ENCODE measurements at regions of chr7 and their contacts with region 1.

Region 1: GRCh38 chr7:100586266-100587025 is at the start of gene FBXO24:
- DNase-seq: peak; percentile 100
- H3K4me3 Mint-ChIP-seq: peak within 1 kb of the TSS; percentile 92
- H3K27ac Mint-ChIP-seq: peak within 1 kb of the TSS; percentile 90
- H3K4me1 Mint-ChIP-seq: peaks cover 13% of the 10 kb centered on the region
- H3K27me3 Mint-ChIP-seq: no peaks in the 10 kb centered on the region
- CTCF ChIP-seq: no peak
- total RNA-seq, gene FBXO24: 0.37 and 1.1 TPM in 2 replicates

Region 2: GRCh38 chr7:99597762-99598501 is 988.5 kb before region 1 on chr7 and contains the start of gene TMEM225B:
- CTCF ChIA-PET with region 1: no interaction called
- POLR2A ChIA-PET with region 1: no interaction called
- intact Hi-C with region 1: no loop called
- DNase-seq: no peak
- H3K4me3 Mint-ChIP-seq: no peak within 1 kb of the TSS
- H3K27ac Mint-ChIP-seq: no peak within 1 kb of the TSS
- H3K4me1 Mint-ChIP-seq: no peaks in the 10 kb centered on the region
- H3K27me3 Mint-ChIP-seq: no peaks in the 10 kb centered on the region
- CTCF ChIP-seq: no peak
- total RNA-seq, gene TMEM225B: 0.70 and 0.96 TPM in 2 replicates

Region 3: DNA sequence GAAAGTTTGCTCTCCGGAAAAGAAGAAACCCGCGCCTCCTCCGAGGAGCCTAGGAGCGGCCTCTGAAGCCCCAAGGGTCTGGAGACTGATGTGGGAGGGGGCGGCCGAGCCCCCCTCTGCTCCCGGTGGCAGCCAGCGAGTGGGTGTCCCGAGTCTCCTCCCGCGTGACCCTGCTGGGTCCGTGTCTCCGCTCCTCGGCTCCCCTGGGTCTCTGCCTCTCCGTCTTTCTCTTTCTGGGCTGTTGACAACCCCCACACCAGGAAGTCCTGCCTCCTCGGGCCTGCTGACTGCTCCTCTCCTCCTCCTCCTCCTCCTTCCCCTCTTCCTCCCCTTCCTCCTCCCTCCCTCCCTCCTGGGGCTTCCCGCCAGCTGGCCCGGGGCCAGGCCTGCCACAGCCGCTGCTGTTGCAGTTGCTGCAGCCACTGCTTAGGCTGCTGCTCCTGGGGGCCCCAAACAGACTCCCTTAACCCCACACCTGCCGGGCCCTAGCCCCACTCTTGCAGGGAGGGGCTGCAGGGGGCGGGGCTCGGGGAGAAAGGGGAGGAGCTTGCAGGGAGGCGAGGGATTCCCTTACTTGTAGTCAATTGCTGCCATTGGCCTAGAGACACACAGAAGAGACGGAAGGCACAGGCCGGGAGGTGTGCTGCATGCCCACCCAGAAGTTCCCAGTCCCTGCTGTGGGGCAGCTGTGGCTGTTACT is 107.3 kb before region 1 on chr7 and contains the start of gene TSC22D4:
- CTCF ChIA-PET with region 1: interaction called, 5 read pairs
- POLR2A ChIA-PET with region 1: interaction called, 12 read pairs
- intact Hi-C with region 1: no loop called
- DNase-seq: peak; percentile 93
- H3K4me3 Mint-ChIP-seq: peak within 1 kb of the TSS; percentile 93
- H3K27ac Mint-ChIP-seq: peak within 1 kb of the TSS; percentile 99
- H3K4me1 Mint-ChIP-seq: peaks cover 7% of the 10 kb centered on the region
- H3K27me3 Mint-ChIP-seq: no peaks in the 10 kb centered on the region
- CTCF ChIP-seq: no peak
- total RNA-seq, gene TSC22D4: 36.0 and 43.8 TPM in 2 replicates

Region 4: DNA sequence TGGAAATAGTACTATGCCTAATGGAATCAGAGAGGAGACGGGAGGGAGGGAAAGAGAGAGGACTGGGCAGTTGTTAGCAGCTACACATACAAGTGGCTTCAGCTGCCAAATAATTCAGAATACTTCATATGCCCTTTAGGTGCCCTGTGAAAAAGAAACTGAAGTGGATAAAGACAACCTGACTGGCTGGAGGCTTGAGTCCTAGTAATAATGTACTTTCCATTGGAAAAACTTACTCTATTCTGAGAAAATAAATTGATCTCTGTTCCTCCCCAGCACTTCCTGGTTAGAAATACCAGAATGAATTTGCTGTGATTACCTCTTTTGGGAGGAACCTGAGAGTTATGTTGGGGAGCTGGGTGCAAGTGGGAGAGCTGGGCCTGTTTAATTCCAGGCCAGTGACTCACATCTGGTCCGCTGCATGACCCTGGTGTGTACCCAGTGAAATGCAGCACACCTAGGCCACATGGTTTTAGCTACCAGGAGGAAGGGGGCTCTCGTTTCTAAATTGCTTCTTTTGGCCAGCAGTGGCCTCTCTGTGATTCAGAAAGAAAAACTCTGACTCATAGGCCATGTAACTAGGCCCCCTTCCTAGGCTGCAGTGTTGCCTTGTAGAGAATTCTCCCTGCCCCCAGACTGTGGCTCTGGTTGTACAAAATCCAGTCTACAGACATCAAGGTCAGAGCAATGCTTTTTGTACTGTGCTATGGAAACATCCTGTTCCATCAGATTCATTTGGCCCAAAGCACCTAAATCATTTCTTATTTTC is 40.9 kb before region 1 on chr7:
- CTCF ChIA-PET with region 1: interaction called, 3 read pairs
- POLR2A ChIA-PET with region 1: interaction called, 17 read pairs
- intact Hi-C with region 1: no loop called
- DNase-seq: peak; percentile 94
- H3K4me3 Mint-ChIP-seq: peak overlapping the region; percentile 1
- H3K27ac Mint-ChIP-seq: peak overlapping the region; percentile 78
- H3K4me1 Mint-ChIP-seq: peaks cover 48% of the 10 kb centered on the region
- H3K27me3 Mint-ChIP-seq: no peaks in the 10 kb centered on the region
- CTCF ChIP-seq: no peak

Region 5: DNA sequence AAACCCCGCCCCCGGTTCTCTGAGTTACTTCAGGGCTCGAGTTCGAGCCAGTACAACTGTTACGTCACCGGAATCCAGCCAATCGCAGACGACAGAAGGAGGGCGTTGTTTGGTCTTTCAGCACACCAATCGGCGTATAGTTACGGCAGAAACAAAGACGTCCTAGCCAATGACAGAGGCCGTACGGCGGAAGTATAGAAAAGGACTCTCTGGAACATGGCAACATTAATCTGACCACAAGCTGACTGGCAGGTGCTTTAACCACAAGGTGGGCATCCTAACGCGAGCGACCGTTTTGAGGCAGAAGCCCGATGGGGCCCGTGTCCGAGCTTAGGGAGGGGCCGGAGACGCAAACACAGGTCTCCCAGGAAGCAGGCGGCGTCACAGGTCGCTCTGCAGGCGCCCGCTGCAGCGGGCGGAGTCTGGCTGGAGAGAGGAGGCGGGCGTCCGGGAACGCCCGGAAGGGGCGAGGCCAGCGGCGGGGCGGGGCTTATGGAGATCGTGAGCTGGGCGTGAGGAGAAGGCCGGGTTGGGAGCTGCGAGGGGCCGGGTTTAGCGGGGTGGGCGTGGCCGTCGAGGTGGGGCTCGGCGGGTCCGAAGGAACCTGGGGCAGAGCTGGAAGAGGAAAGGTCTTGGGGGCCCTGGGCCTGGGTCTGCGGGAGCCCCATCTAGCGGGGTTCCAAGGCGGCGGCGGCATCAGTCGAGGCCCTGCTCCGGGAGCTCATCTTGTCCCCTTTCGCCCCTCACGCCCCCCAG is 25.7 kb after region 1 on chr7 and contains the start of gene MOSPD3:
- CTCF ChIA-PET with region 1: interaction called, 8 read pairs
- POLR2A ChIA-PET with region 1: interaction called, 49 read pairs
- intact Hi-C with region 1: no loop called
- DNase-seq: peak; percentile 99
- H3K4me3 Mint-ChIP-seq: peak within 1 kb of the TSS; percentile 92
- H3K27ac Mint-ChIP-seq: peak within 1 kb of the TSS; percentile 99
- H3K4me1 Mint-ChIP-seq: peaks cover 6% of the 10 kb centered on the region
- H3K27me3 Mint-ChIP-seq: no peaks in the 10 kb centered on the region
- CTCF ChIP-seq: no peak
- total RNA-seq, gene MOSPD3: 5.2 and 7.4 TPM in 2 replicates

Region 6: DNA sequence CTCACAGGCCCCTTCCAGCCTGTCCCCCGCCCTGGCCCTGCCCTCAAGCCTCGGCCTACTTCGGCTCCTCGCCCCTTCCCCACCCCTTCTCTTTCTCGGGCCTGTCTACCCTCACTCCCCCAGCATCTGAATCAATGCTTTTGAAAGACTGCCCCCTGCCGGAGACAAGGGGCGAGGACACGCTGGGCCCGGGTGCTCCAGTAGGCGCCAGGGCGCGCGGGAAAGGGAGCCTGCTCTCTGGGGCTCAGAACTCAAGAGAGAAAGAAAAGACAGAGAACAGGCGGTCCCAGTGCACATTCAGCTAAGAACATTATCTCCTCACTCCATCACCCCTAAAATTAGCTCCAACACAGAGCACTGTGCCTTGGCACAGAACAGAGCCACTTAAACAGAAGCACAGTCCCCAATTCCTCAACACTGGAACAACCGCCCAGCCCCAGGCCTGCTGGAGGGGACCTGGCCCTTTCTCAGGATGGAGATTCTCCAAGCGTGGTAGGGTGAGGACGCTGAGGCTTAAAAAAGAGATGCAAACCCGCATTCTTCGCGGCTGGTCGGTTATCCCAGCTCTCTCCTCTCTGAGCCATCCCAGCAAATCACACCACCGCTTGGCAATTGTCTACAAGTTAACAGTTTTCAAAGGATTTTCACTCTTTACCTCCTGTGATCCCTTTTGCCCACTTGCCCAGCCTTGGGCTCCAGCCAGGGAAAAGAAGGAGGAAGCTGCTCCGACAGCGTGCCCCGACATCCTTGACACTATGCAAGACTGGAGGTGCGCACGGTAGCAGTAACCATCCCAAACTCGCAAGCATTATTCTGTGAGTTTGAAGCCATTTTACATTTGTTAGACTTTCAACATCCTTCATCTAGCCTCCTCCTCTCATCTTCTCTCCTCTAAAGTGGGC is 105.5 kb after region 1 on chr7:
- CTCF ChIA-PET with region 1: interaction called, 12 read pairs
- POLR2A ChIA-PET with region 1: interaction called, 35 read pairs
- intact Hi-C with region 1: no loop called
- DNase-seq: peak; percentile 82
- H3K4me3 Mint-ChIP-seq: peak overlapping the region; percentile 93
- H3K27ac Mint-ChIP-seq: peak overlapping the region; percentile 92
- H3K4me1 Mint-ChIP-seq: peaks cover 19% of the 10 kb centered on the region
- H3K27me3 Mint-ChIP-seq: no peaks in the 10 kb centered on the region
- CTCF ChIP-seq: peak; percentile 81

Region 7: GRCh38 chr7:100711369-100711768 is 124.9 kb after region 1 on chr7:
- CTCF ChIA-PET with region 1: no interaction called
- POLR2A ChIA-PET with region 1: no interaction called
- intact Hi-C with region 1: no loop called
- DNase-seq: no peak
- H3K4me3 Mint-ChIP-seq: no peak overlapping the region
- H3K27ac Mint-ChIP-seq: no peak overlapping the region
- H3K4me1 Mint-ChIP-seq: peaks cover 10% of the 10 kb centered on the region
- H3K27me3 Mint-ChIP-seq: no peaks in the 10 kb centered on the region
- CTCF ChIP-seq: no peak

Region 8: GRCh38 chr7:100852048-100852872 is 265.8 kb after region 1 on chr7 and contains the start of gene SLC12A9:
- CTCF ChIA-PET with region 1: no interaction called
- POLR2A ChIA-PET with region 1: interaction called, 13 read pairs
- intact Hi-C with region 1: no loop called
- DNase-seq: peak; percentile 90
- H3K4me3 Mint-ChIP-seq: peak within 1 kb of the TSS; percentile 90
- H3K27ac Mint-ChIP-seq: peak within 1 kb of the TSS; percentile 22
- H3K4me1 Mint-ChIP-seq: peaks cover 6% of the 10 kb centered on the region
- H3K27me3 Mint-ChIP-seq: no peaks in the 10 kb centered on the region
- CTCF ChIP-seq: peak; percentile 95
- total RNA-seq, gene SLC12A9: 19.2 and 21.0 TPM in 2 replicates

Measured in MCF 10A (cell line).